ENCODE measurements at regions of chr10 and their contacts with region 1.

Region 1: DNA sequence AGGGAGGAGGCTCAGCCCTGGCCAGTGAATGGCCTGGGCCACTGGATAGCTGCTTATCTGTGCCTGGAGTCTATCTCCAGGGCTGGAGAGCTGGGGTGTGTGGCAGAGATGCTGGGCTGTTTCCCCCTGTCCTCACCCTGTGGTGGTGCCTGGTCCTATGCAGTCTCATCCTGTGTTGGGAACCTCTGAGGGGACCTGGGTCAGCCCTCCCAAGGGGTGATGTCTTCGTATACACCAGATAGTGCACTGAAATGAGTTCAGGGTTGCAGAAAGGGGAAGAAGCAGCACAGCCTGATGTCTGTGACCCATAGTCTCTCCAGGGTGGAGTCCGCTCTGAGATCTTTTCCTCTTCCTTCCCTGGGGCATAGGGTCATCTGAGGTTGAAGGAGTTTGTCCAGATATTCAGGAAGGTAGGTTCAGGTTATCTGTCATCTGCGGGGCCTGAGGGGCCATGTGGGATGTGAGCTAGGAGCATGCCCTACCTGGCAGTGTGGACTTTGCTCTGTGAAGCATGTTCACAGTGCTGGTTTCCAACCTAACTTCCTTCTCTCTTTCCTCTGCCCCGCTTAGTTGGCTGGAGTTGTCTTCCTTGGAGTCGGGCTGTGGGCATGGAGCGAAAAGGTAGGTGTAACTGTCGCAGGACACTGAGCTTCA is 33.4 kb upstream of the SH2D4B start:
- DNase-seq: no peak
- ATAC-seq: peak; percentile 52
- H3K4me3 ChIP-seq: no peak overlapping the region
- H3K4me3 Mint-ChIP-seq: peak overlapping the region; percentile 24 to 86 (median 71)
- H3K27ac ChIP-seq: peak overlapping the region; percentile 59
- H3K27ac Mint-ChIP-seq: peak overlapping the region; percentile 76 to 99 (median 89)
- H3K4me1 ChIP-seq: peaks cover 64 to 69% of the 10 kb centered on the region in 2 donors
- H3K4me1 Mint-ChIP-seq: peaks cover 63 to 84% (median 75%) of the 10 kb centered on the region in 7 donors
- H3K27me3 ChIP-seq: no peaks in the 10 kb centered on the region
- H3K27me3 Mint-ChIP-seq: no peaks in the 10 kb centered on the region

Region 2: GRCh38 chr10:80459047-80459931 is 45.0 kb before region 1 on chr10:
- CTCF ChIA-PET with region 1: interaction called, 839 read pairs
- POLR2A ChIA-PET with region 1: interaction called, 582 read pairs
- intact Hi-C with region 1: loop called (anchors 1 to 2 kb)
- DNase-seq: peak in 7 of 9 donors; percentile 53 to 66 (median 55)
- ATAC-seq: peak; percentile 66
- H3K4me3 ChIP-seq: peak overlapping the region; percentile 87
- H3K4me3 Mint-ChIP-seq: peak overlapping the region; percentile 79 to 99 (median 98)
- H3K27ac ChIP-seq: peak overlapping the region; percentile 84
- H3K27ac Mint-ChIP-seq: peak overlapping the region; percentile 87 to 99 (median 98)
- H3K4me1 ChIP-seq: peaks cover 75 to 79% of the 10 kb centered on the region in 2 donors
- H3K4me1 Mint-ChIP-seq: peaks cover 77 to 85% (median 83%) of the 10 kb centered on the region in 7 donors
- H3K27me3 ChIP-seq: no peaks in the 10 kb centered on the region
- H3K27me3 Mint-ChIP-seq: no peaks in the 10 kb centered on the region

Region 3: GRCh38 chr10:80487791-80488538 is 16.3 kb before region 1 on chr10:
- CTCF ChIA-PET with region 1: interaction called, 17 read pairs
- POLR2A ChIA-PET with region 1: interaction called, 182 read pairs
- intact Hi-C with region 1: loop called (anchors 1 to 2 kb)
- DNase-seq: peak in 8 of 9 donors; percentile 48 to 63 (median 54)
- ATAC-seq: peak; percentile 78
- H3K4me3 ChIP-seq: peak overlapping the region; percentile 49
- H3K4me3 Mint-ChIP-seq: peak overlapping the region; percentile 64 to 88 (median 80)
- H3K27ac ChIP-seq: peak overlapping the region; percentile 74
- H3K27ac Mint-ChIP-seq: peak overlapping the region; percentile 74 to 99 (median 88)
- H3K4me1 ChIP-seq: peaks cover 93 to 98% of the 10 kb centered on the region in 2 donors
- H3K4me1 Mint-ChIP-seq: peaks cover 83 to 100% (median 93%) of the 10 kb centered on the region in 7 donors
- H3K27me3 ChIP-seq: no peaks in the 10 kb centered on the region
- H3K27me3 Mint-ChIP-seq: no peaks in the 10 kb centered on the region

Region 4: GRCh38 chr10:80515511-80515910 is 11.2 kb after region 1 on chr10:
- CTCF ChIA-PET with region 1: interaction called, 13 read pairs
- POLR2A ChIA-PET with region 1: interaction called, 5 read pairs
- intact Hi-C with region 1: no loop called
- DNase-seq: no peak
- ATAC-seq: no peak
- H3K4me3 ChIP-seq: no peak overlapping the region
- H3K4me3 Mint-ChIP-seq: no peak overlapping the region
- H3K27ac ChIP-seq: peak overlapping the region; percentile 48
- H3K27ac Mint-ChIP-seq: peak overlapping the region in 5 of 9 donors; percentile 22 to 94 (median 79)
- H3K4me1 ChIP-seq: peaks cover 0 to 11% of the 10 kb centered on the region in 2 donors
- H3K4me1 Mint-ChIP-seq: peaks cover 28 to 49% (median 38%) of the 10 kb centered on the region in 7 donors
- H3K27me3 ChIP-seq: no peaks in the 10 kb centered on the region
- H3K27me3 Mint-ChIP-seq: no peaks in the 10 kb centered on the region

Measured in naive thymus-derived CD4-positive, alpha-beta T cell (primary cell).